Endothelial cell of umbilical vein (primary cell): ENCODE measurements at regions of chr2 and their contacts with region 1.

Region 1: DNA sequence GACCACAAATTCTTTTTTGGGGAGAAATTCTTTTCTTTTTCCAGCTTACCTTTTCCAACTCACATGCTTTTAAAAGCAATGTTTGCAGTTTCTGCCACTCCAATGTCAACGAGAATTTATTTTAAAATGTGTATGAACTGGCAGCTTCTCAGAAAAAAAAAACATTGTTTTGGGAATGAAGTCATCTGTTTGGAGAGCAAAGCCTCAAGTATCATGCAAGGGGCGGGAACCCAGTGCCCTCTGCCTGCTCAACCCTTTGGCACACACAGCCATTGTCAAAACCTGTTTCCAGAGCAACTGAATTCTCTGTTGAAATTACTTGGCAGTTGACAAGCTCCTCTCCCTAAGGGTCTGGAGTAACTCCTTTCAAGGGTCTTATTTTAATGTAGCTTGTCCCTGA is 128.5 kb downstream of the QPCT start:
- DNase-seq: peak; percentile 82
- H3K4me3 ChIP-seq: no peak overlapping the region
- H3K27ac ChIP-seq: no peak overlapping the region
- H3K4me1 ChIP-seq: peaks cover 6% of the 10 kb centered on the region
- H3K27me3 ChIP-seq: no peaks in the 10 kb centered on the region
- CTCF ChIP-seq: no peak
- POLR2A ChIP-seq: no peak

Region 2: DNA sequence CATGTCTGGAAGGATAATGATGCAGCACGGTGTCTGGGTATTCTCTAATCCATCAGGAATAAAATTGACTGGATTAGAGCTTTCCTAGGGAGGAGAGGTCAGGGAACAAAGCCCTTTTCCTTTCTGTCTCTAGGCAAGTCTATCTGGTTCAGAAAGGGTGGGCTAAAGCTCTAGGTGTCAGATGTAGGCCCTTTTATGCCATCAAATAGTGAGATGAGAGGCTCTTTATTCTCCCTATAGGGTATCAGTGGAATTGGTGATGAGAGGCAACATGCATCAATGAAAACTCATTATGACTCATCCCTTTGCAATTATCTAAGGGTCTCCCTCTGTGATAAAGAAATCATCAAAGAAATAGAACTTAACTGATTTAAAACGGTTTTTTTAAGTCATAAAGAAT is 1445.3 kb before region 1 on chr2:
- CTCF ChIA-PET with region 1: no interaction called
- POLR2A ChIA-PET with region 1: no interaction called
- dilution Hi-C with region 1: no loop called
- intact Hi-C with region 1: loop called (anchors 10 kb)
- DNase-seq: no peak
- H3K4me3 ChIP-seq: no peak overlapping the region
- H3K27ac ChIP-seq: no peak overlapping the region
- H3K4me1 ChIP-seq: no peaks in the 10 kb centered on the region
- H3K27me3 ChIP-seq: no peaks in the 10 kb centered on the region
- CTCF ChIP-seq: no peak
- POLR2A ChIP-seq: no peak

Region 3: GRCh38 chr2:37600735-37601134 is 127.8 kb after region 1 on chr2:
- CTCF ChIA-PET with region 1: no interaction called
- POLR2A ChIA-PET with region 1: no interaction called
- dilution Hi-C with region 1: no loop called
- intact Hi-C with region 1: no loop called
- DNase-seq: no peak
- H3K4me3 ChIP-seq: no peak overlapping the region
- H3K27ac ChIP-seq: no peak overlapping the region
- H3K4me1 ChIP-seq: peaks cover 14% of the 10 kb centered on the region
- H3K27me3 ChIP-seq: no peaks in the 10 kb centered on the region
- CTCF ChIP-seq: no peak
- POLR2A ChIP-seq: no peak